Colonic mucosa (tissue), 4 donors: ENCODE measurements at regions of chr13 and their contacts with region 1.

Region 1: DNA sequence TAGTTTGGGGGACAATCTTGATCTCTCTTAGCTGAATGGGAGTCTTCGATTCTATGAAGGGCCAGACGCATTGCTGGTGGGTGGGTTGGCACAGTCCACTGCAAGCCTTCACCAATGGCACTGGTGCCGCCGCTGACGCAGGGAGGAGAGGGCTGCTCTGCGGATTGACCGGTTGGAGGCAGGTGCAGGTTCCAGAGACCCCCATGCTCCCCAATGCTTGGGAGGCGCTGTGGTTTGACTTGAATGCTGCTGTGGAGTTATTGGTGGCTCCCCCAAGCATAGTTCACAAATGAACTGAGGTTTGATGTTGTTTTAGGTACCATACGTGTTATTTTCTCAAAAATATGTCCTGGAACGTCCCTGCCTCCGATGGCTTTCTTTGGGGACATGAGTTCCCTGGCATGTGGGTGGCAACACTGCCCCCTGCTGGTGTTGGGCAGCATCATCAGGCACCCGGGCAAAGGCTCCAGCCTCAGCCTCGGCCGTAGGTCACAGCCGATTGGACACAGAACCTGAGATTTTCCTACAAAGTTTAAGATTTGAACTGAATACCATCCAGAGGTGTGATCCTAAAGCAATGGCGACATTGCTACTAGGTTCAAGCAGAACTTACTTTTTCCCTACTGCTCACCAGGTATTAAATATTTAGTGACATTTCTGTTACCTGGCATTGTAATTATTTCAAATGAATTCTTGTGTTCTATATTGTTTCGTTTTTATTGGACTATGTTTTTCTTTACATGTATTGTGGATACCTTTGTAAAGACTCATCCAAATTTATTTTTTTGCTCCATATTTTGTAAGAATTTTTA is 95.5 kb downstream of the ANKRD10 start:
- DNase-seq: peak; percentile 83
- H3K4me3 ChIP-seq: no peak overlapping the region
- H3K27ac ChIP-seq: no peak overlapping the region
- H3K4me1 ChIP-seq: no peaks in the 10 kb centered on the region
- H3K27me3 ChIP-seq: no peaks in the 10 kb centered on the region
- CTCF ChIP-seq: peak; percentile 99

Region 2: GRCh38 chr13:110455941-110456340 is 363.5 kb before region 1 on chr13:
- intact Hi-C with region 1: no loop called
- DNase-seq: peak; percentile 83
- H3K4me3 ChIP-seq: no peak overlapping the region
- H3K27ac ChIP-seq: no peak overlapping the region
- H3K4me1 ChIP-seq: no peaks in the 10 kb centered on the region
- H3K27me3 ChIP-seq: no peaks in the 10 kb centered on the region
- CTCF ChIP-seq: peak; percentile 75

Region 3: DNA sequence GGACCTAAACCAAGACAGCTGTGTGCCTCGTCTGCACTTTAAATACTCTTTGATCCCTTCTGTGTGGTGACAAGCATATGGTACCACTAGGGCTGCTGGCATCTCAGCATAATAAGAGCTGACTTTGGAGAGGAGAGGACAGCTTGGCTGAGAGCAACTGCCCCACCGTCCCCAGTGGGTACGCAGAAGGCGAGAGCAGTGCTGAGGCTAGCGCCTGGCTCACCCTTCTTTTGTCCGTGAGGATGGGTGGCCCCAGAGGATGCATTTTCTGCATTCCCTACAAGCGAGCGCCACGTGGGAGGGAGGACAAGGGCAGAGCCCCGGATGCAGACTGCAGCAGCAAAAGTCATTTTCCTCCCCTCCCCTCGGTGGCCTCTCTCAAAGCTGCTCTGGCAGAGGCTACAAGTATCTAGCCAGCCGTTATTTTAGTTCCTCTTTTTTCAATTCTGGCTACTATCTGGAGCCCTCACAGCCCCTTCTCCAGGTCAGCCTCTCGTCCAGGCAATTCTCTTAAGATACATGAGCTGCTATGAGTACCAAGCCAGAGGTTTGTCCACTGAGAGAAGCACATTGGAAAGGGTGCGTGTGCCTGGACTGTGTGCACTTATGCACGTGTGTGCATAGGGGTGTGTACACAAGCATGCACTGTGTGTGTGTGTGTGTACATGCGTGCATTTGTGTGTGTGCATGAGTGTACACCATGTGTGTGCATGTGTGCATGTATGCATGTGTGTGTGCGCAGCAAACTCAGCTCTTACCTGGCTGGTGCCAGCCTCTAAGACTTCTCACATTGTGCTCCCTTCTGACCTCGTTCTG is 309.2 kb before region 1 on chr13:
- intact Hi-C with region 1: no loop called
- DNase-seq: no peak
- H3K4me3 ChIP-seq: no peak overlapping the region
- H3K27ac ChIP-seq: no peak overlapping the region
- H3K4me1 ChIP-seq: peaks cover 6% of the 10 kb centered on the region
- H3K27me3 ChIP-seq: no peaks in the 10 kb centered on the region
- CTCF ChIP-seq: no peak

Region 4: GRCh38 chr13:110593430-110594130 is 225.8 kb before region 1 on chr13:
- intact Hi-C with region 1: loop called (anchors 5 kb)
- DNase-seq: no peak
- H3K4me3 ChIP-seq: no peak overlapping the region
- H3K27ac ChIP-seq: no peak overlapping the region
- H3K4me1 ChIP-seq: no peaks in the 10 kb centered on the region
- H3K27me3 ChIP-seq: no peaks in the 10 kb centered on the region
- CTCF ChIP-seq: peak; percentile 57

Region 5: DNA sequence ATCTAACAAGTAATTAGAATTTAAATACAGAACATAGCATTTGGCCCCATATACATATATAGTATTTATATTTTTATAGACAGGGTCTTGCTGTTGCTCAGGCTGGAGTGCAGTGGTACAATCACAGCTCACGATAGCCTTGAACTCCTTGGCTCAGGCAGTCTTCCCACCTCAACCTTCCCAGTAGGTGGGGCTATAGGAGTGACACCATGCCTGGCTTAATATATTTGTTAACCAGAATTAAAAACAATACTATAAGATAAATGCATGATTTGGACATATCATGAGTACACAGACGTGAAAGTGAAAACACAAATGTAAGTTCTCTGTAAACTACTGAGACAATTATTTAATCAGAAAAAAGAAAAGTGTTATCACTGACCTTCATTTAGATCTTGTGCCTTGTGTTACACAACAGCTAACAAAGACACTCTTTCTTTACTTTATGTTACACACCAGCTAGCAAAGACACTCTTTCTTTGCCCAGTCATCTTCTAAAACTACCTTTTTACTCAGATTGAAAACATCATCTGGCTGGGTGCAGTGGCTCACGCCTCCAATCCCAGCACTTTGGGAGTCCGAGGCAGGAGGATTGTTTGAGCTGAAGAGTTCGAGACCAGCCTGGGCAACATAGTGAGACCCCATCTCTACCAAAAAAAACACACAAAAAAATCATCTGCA is 136.1 kb before region 1 on chr13:
- intact Hi-C with region 1: loop called (anchors 2 kb)
- DNase-seq: no peak
- H3K4me3 ChIP-seq: no peak overlapping the region
- H3K27ac ChIP-seq: no peak overlapping the region
- H3K4me1 ChIP-seq: no peaks in the 10 kb centered on the region
- H3K27me3 ChIP-seq: no peaks in the 10 kb centered on the region
- CTCF ChIP-seq: peak; percentile 64

Region 6: DNA sequence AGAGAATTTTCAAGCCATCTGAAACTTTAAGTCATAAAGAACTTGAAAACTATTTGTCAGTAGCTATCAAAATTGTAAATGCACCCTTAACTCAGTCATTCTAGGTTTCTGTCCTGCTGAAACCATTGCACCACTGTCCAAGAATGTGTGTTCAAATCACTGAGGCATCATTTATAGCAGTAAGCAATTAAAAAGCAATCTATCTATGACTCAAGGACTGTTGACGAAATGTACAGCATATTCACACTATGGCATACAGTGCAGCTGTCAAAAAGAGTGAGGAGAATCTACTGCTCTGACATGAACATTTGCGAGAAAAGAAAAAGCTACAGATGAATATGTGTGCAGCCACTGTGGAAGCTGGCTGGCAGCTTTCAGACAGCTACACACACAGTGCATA is 34.7 kb before region 1 on chr13:
- intact Hi-C with region 1: no loop called
- DNase-seq: no peak
- H3K4me3 ChIP-seq: no peak overlapping the region
- H3K27ac ChIP-seq: no peak overlapping the region
- H3K4me1 ChIP-seq: no peaks in the 10 kb centered on the region
- H3K27me3 ChIP-seq: no peaks in the 10 kb centered on the region
- CTCF ChIP-seq: no peak